Tibial artery (tissue), 4 donors: ENCODE measurements at regions of chr1 and their contacts with region 1.

Region 1: DNA sequence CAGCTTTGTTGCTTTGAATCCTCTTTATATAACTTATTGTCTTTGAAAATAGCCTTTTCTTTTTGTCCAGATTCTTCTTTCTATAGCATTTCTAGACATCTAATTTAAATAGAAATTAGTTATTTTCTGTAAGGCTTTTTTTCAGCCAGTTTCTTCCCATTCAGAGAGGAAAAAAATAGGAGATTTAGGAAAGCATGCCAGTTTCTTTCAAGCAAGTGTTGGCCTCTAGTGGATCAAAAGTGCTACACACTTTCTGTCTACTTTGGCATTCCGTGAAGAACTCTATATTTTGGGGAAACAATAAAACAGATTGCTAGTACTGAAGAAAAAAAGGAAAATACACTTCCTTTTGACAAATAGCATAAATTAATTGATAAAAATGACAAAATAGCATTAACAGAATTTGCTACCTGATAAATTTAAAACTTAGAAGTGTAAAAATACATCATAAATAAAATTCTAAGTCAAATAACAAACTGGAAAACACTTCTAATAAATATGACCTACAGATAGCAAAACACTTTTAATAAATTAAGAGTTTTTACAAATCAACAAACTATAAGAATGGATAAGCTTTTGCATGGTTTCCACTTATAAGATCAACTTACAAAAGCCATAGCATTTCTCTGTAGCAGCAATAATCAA is 13.1 kb upstream of the EXO1 start:
- DNase-seq: no peak
- H3K4me3 ChIP-seq: no peak overlapping the region
- H3K27ac ChIP-seq: no peak overlapping the region
- H3K4me1 ChIP-seq: no peaks in the 10 kb centered on the region
- H3K27me3 ChIP-seq: no peaks in the 10 kb centered on the region
- CTCF ChIP-seq: peak; percentile 69 to 71

Region 2: DNA sequence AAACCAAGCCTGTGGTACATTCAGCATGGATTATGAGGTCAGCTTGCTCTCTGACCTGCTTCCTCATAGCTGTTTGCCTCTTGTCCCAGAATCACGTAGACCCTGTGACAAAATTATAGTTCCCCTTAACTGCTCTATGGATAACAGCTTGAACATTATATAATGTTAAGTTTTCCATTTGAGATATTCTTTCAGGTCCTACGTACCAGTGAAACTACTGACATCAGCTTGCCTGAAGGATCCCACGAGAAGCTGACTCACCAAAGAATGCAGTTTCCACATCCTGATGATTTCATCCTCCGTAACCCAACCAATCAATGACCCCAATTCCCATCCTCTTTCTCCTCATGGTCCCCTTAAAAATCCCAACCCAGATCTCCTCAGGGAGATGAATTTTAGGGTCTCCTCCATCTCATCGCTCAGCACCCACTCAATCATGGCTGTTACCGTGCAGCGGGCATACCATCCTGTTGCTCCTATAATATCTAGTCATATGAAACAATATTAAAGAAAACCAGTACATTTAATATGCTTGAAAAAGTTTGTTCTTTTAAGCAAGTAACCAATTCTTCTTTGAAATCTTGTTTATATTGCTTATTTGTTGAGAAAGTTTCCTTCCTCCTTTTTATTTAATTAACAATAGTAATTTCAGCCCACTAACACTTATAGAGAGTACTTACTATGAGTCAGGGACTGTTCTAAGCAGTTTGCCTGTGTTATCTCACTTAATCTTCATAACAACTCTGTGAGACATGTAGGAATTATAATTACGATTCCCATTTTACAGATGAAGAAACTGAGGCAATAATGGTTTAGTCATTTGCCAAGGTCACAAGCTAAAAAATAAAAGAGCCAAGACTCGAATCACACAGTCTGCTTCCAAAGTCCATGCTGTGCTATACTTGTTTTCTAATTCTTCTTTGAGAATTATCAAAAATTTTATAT is 222.1 kb before region 1 on chr1:
- intact Hi-C with region 1: loop called (anchors 2 kb)
- DNase-seq: no peak
- H3K4me3 ChIP-seq: no peak overlapping the region
- H3K27ac ChIP-seq: no peak overlapping the region
- H3K4me1 ChIP-seq: no peaks in the 10 kb centered on the region
- H3K27me3 ChIP-seq: no peaks in the 10 kb centered on the region
- CTCF ChIP-seq: no peak

Region 3: GRCh38 chr1:241782396-241782795 is 52.5 kb before region 1 on chr1:
- intact Hi-C with region 1: no loop called
- DNase-seq: no peak
- H3K4me3 ChIP-seq: no peak overlapping the region
- H3K27ac ChIP-seq: no peak overlapping the region
- H3K4me1 ChIP-seq: peaks cover 0 to 17% (median 2%) of the 10 kb centered on the region in 4 donors
- H3K27me3 ChIP-seq: no peaks in the 10 kb centered on the region
- CTCF ChIP-seq: no peak